ENCODE measurements at regions of chr11 and their contacts with region 1.

Region 1: DNA sequence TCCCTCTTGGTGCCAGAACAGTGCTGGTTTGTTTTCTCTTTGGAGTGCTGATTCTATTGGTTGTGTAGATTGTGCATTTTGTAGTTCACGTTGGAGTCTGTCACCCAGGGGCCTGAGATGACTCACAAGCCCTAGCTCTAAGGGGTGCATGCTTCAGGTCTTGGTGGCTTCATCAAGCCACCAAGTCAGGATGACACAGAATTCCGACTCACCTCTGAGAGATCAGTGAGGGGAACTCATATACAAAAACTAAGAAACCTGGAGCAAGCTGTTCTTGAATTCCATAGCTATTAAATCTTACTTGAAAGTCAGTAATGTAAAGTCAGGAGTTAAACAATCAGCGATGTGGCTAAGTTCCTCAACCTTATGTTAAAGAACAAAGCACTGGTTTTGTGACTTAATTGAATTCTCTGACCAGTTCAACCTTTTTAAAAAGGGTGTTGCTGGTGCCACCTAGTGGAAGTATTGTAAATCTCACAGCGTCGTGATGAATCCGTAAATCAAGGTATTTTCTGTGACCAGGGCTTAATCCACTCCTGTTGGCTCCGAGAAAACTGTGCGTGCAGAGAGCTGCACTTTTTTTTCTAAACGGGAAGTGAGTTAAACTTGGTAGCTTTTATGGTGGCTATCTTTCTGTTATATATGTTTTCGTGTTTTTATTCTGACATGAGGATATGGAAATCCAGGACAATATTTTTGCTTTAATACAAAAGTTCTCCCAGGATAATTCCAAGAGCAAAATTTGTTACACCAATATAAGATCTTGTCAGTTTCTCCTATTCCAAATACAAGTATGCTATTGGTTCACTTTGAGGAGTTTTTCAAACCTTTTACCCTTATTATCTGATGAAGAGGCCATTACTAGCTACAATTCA is 14.6 kb downstream of the MMP13 start:
- DNase-seq: peak; percentile 61
- ATAC-seq: peak; percentile 78
- H3K4me3 Mint-ChIP-seq: no peak overlapping the region
- H3K27ac Mint-ChIP-seq: no peak overlapping the region
- H3K4me1 Mint-ChIP-seq: peaks cover 3% of the 10 kb centered on the region
- H3K27me3 Mint-ChIP-seq: peaks cover 16% of the 10 kb centered on the region

Region 2: GRCh38 chr11:102733232-102733875 is 207.6 kb before region 1 on chr11:
- CTCF ChIA-PET with region 1: interaction called, 15 read pairs
- DNase-seq: peak; percentile 71
- ATAC-seq: peak; percentile 68
- H3K4me3 Mint-ChIP-seq: no peak overlapping the region
- H3K27ac Mint-ChIP-seq: no peak overlapping the region
- H3K4me1 Mint-ChIP-seq: no peaks in the 10 kb centered on the region
- H3K27me3 Mint-ChIP-seq: peaks cover 9% of the 10 kb centered on the region

Region 3: GRCh38 chr11:102914238-102915043 is 26.5 kb before region 1 on chr11:
- CTCF ChIA-PET with region 1: interaction called, 19 read pairs
- DNase-seq: no peak
- ATAC-seq: no peak
- H3K4me3 Mint-ChIP-seq: no peak overlapping the region
- H3K27ac Mint-ChIP-seq: no peak overlapping the region
- H3K4me1 Mint-ChIP-seq: peaks cover 2% of the 10 kb centered on the region
- H3K27me3 Mint-ChIP-seq: peaks cover 13% of the 10 kb centered on the region

Region 4: DNA sequence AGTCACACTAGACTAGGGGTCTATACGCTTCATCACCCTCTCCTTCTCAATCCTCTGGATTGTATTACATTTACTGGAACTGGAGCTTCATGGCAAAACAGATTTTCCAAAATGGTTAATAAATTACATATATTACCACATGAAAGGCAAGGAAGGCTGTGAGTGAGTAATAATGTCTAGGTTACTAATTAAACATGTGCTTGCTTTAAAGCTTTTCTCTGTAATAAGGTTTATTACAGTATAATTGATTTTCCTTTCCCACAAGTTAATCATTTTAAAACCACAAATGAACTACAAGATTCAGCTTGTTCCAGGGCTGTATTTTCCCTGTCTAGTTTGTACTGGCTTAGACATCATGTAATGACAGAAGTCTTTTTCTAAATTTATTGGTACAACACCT is 11.0 kb before region 1 on chr11:
- CTCF ChIA-PET with region 1: interaction called, 14 read pairs
- DNase-seq: no peak
- ATAC-seq: no peak
- H3K4me3 Mint-ChIP-seq: no peak overlapping the region
- H3K27ac Mint-ChIP-seq: no peak overlapping the region
- H3K4me1 Mint-ChIP-seq: peaks cover 7% of the 10 kb centered on the region
- H3K27me3 Mint-ChIP-seq: peaks cover 20% of the 10 kb centered on the region